Activated B cell treated with CpG ODN at 0.5 μM for 24 hours (primary cell): ENCODE measurements at regions of chr3 and their contacts with region 1.

Region 1: GRCh38 chr3:195542698-195543499 is at the start of gene PPP1R2:
- DNase-seq: peak; percentile 95
- ATAC-seq: peak; percentile 84
- H3K4me3 Mint-ChIP-seq: peak within 1 kb of the TSS; percentile 91
- H3K27ac Mint-ChIP-seq: peak within 1 kb of the TSS; percentile 92
- H3K4me1 Mint-ChIP-seq: peaks cover 76% of the 10 kb centered on the region
- H3K27me3 Mint-ChIP-seq: no peaks in the 10 kb centered on the region
- CTCF ChIP-seq: no peak
- total RNA-seq, gene PPP1R2: 62.5 and 64.1 TPM in 2 replicates

Region 2: DNA sequence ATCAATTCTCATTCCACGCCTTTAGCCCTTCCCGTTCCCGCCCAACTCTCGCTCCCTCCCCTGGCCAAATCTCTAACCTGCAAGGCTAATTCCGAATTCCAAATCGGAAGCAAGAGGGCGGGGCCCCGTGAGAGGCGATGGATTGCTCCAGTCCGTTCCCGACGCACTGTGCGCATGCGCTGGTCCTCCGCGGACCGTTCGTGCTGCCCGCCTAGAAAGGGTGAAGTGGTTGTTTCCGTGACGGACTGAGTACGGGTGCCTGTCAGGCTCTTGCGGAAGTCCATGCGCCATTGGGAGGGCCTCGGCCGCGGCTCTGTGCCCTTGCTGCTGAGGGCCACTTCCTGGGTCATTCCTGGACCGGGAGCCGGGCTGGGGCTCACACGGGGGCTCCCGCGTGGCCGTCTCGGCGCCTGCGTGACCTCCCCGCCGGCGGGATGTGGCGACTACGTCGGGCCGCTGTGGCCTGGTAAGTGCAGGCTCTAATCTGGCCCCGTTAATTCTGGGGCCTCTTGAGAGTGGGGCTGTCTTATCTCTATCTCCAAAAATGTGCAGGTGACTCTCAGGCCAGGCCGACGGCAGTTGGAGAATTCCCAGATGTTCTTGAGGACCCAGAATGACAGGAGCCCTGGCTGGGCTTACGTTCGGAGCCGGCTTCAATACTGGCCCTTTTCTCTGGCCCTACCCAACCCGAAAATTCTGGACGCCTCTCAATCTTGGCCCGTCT is 1949.8 kb before region 1 on chr3 and contains the start of gene OPA1:
- CTCF ChIA-PET with region 1: no interaction called
- POLR2A ChIA-PET with region 1: no interaction called
- intact Hi-C with region 1: loop called (anchors 5 kb)
- DNase-seq: peak; percentile 82
- ATAC-seq: peak; percentile 96
- H3K4me3 Mint-ChIP-seq: peak within 1 kb of the TSS; percentile 94
- H3K27ac Mint-ChIP-seq: peak within 1 kb of the TSS; percentile 89
- H3K4me1 Mint-ChIP-seq: peaks cover 52% of the 10 kb centered on the region
- H3K27me3 Mint-ChIP-seq: no peaks in the 10 kb centered on the region
- CTCF ChIP-seq: no peak
- total RNA-seq, gene OPA1: 76.1 and 80.6 TPM in 2 replicates

Region 3: DNA sequence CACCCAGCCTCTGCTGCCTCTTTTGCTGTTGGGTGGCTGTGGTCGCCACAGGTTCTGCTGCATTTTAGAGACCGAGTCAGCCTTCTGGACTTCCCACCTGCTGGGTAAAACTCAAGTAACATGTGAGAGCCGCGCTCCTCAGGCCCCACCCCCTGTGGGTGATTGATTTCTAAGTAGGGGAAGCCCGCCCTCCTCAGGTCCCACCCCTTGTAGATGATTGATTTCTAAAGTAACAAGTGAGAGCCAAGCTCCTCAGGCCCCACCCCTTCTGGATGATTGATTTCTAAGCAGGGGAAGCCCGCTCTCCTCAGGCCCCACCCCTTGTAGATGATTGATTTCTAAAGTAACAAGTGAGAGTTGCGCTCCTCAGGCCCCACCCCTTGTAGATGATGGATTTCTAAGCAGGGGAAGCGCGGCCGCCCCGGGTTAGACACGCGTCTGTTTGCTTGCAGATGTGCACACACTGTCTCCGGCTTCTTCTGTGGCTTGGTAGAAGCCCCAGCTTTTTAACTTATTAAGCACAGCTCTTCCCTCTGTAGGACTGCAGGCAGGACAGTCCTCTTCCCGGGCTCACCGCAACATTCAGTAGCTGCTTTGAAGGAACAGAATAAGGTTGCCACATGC is 773.8 kb before region 1 on chr3:
- CTCF ChIA-PET with region 1: no interaction called
- POLR2A ChIA-PET with region 1: interaction called, 3 read pairs
- intact Hi-C with region 1: loop called (anchors 10 kb)
- DNase-seq: peak; percentile 69
- ATAC-seq: peak; percentile 98
- H3K4me3 Mint-ChIP-seq: peak overlapping the region; percentile 86
- H3K27ac Mint-ChIP-seq: peak overlapping the region; percentile 94
- H3K4me1 Mint-ChIP-seq: peaks cover 34% of the 10 kb centered on the region
- H3K27me3 Mint-ChIP-seq: peaks cover 5% of the 10 kb centered on the region
- CTCF ChIP-seq: no peak

Region 4: DNA sequence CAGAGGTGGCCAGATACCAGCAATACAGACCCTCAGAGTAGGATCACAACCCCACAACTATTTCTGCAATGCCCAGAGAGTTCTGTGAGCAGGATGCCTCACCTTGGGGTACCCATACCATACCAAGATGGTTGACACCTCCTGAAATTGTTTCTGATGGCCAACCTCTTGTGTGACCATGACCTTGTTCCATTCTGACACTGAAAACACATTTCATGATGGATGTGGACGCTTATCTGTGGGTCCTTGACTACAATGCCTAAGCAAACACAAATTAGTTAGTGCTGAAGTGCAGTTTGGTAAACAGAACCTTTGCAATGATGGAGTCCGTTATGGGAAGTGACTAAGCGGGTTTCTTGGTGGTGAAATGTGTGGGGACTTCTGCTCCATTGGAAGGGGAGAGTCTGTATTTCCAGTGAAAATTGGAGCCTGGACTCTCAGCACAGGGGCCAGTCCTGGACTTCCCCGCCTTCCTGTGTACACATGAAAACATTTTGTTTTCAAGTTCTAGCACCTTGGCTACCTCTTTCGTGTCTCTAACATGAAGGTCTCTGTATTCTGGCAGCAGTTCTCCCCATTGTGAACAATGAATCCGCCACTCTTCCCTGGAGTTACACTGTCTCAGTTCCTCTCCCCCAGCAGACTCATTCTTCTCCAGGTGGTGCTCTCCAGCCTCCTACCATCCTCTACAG is 378.2 kb before region 1 on chr3:
- CTCF ChIA-PET with region 1: no interaction called
- POLR2A ChIA-PET with region 1: no interaction called
- intact Hi-C with region 1: no loop called
- DNase-seq: no peak
- ATAC-seq: no peak
- H3K4me3 Mint-ChIP-seq: no peak overlapping the region
- H3K27ac Mint-ChIP-seq: no peak overlapping the region
- H3K4me1 Mint-ChIP-seq: peaks cover 37% of the 10 kb centered on the region
- H3K27me3 Mint-ChIP-seq: no peaks in the 10 kb centered on the region
- CTCF ChIP-seq: no peak

Region 5: DNA sequence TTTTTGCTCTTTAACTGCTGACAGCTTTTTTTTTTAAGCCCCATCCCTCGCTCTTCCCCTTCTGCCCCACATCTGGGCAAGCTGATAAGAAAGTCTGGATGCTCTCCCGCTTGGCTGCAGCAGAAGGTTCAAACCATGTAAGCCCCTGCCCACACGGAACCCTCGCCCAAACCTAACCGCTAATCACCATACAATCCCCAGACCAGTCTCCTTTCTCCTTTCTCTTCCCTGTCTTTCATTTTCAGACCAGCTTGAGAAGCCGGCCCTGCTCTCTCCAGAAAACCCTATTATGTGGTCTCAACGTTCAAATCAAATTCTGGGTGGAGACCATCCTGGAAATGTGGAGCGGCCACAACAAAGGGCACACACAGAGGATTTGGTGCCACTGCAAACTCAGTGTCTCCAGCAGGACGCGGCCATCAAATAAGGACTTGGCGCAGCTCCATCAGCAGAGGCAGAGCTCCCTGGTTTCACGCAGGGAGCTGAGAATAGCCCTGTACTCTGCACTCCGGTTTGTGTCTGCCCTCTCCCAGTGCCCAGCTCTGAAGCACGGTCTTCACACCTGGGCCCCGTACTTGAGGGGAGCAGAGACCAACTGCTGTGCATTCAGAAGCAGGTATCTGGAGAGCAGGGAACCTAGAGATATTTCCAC is 364.6 kb before region 1 on chr3:
- CTCF ChIA-PET with region 1: no interaction called
- POLR2A ChIA-PET with region 1: no interaction called
- intact Hi-C with region 1: no loop called
- DNase-seq: no peak
- ATAC-seq: no peak
- H3K4me3 Mint-ChIP-seq: no peak overlapping the region
- H3K27ac Mint-ChIP-seq: no peak overlapping the region
- H3K4me1 Mint-ChIP-seq: no peaks in the 10 kb centered on the region
- H3K27me3 Mint-ChIP-seq: peaks cover 2% of the 10 kb centered on the region
- CTCF ChIP-seq: no peak

Region 6: DNA sequence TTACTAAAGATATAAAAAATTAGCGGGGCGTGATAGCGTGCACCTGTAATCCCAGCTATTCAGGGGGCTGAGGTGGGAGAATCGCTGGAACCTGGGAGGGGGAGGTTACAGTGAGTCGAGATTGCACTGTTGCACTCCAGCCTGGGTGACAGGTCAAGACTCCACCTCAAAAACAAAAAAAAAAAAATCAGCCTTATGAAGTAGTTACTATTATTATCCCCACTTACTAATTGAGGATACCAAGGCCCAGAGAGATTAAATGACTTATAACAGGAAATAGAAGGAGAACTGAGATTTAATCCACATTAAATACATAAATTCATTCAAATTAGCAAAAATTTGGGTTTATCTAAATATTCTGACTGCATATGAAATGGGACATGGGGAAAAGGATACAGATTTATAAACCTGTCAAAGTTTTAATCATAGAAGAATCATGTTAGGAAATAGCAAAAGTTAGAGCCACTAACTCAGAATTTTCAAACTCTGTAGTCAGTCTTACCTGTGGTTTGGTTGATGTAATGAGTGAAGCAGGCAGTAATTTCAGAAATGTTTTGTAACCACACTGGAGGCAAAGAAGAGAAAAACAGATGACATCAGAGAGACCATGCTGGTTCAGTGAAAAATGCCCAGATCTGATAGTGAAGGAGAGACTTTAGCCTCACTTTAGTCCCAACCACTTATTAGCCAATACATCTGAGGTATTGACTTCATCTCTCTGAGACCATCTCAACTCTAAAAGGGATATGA is 75.1 kb before region 1 on chr3:
- CTCF ChIA-PET with region 1: no interaction called
- POLR2A ChIA-PET with region 1: no interaction called
- intact Hi-C with region 1: no loop called
- DNase-seq: no peak
- ATAC-seq: no peak
- H3K4me3 Mint-ChIP-seq: no peak overlapping the region
- H3K27ac Mint-ChIP-seq: peak overlapping the region; percentile 25
- H3K4me1 Mint-ChIP-seq: peaks cover 6% of the 10 kb centered on the region
- H3K27me3 Mint-ChIP-seq: no peaks in the 10 kb centered on the region
- CTCF ChIP-seq: no peak

Region 7: GRCh38 chr3:195522254-195523023 is 20.5 kb before region 1 on chr3:
- CTCF ChIA-PET with region 1: interaction called, 11 read pairs
- POLR2A ChIA-PET with region 1: interaction called, 10 read pairs
- intact Hi-C with region 1: loop called (anchors 2 kb)
- DNase-seq: no peak
- ATAC-seq: peak; percentile 10
- H3K4me3 Mint-ChIP-seq: no peak overlapping the region
- H3K27ac Mint-ChIP-seq: peak overlapping the region; percentile 22
- H3K4me1 Mint-ChIP-seq: peaks cover 13% of the 10 kb centered on the region
- H3K27me3 Mint-ChIP-seq: no peaks in the 10 kb centered on the region
- CTCF ChIP-seq: peak; percentile 85

Region 8: DNA sequence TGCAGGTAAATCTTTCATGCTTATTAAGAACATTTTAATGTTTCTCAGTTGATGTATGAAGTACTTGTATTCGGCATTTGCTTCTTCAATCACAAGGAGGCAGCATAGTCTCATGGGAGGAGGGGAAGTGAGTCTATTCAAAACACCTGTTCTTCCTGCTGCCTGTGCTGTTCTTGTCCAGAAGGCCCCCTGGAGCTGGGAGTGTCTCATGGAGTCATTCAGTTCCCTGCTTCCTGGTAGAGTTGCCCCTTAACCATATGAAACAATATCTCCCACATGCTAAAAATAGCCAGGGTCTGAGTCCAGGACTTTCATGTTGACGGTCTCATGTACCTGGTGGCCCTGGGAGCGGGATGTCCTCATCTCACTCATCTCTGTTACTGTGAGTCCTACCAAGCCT is 15.7 kb after region 1 on chr3:
- CTCF ChIA-PET with region 1: interaction called, 3 read pairs
- POLR2A ChIA-PET with region 1: interaction called, 14 read pairs
- intact Hi-C with region 1: no loop called
- DNase-seq: no peak
- ATAC-seq: peak; percentile 54
- H3K4me3 Mint-ChIP-seq: no peak overlapping the region
- H3K27ac Mint-ChIP-seq: no peak overlapping the region
- H3K4me1 Mint-ChIP-seq: peaks cover 11% of the 10 kb centered on the region
- H3K27me3 Mint-ChIP-seq: no peaks in the 10 kb centered on the region
- CTCF ChIP-seq: no peak